Spleen (tissue), 13 donors: ENCODE measurements at regions of chr1 and their contacts with region 1.

Region 1: GRCh38 chr1:173476664-173477285 is 360 bp upstream of the PRDX6 start:
- DNase-seq: peak; percentile 97
- H3K4me3 ChIP-seq: peak overlapping the region; percentile 66 to 91 (median 86)
- H3K27ac ChIP-seq: peak overlapping the region; percentile 96 to 99 (median 97)
- H3K4me1 ChIP-seq: peaks cover 30 to 72% (median 61%) of the 10 kb centered on the region in 6 donors
- H3K27me3 ChIP-seq: no peaks in the 10 kb centered on the region
- CTCF ChIP-seq: no peak
- POLR2A ChIP-seq: peak in 2 of 3 donors; percentile 7 to 48

Region 2: GRCh38 chr1:173122958-173123852 is 353.6 kb before region 1 on chr1:
- intact Hi-C with region 1: no loop called
- DNase-seq: no peak
- H3K4me3 ChIP-seq: peak overlapping the region in 3 of 8 donors; percentile 1 to 42 (median 30)
- H3K27ac ChIP-seq: peak overlapping the region; percentile 14 to 85 (median 75)
- H3K4me1 ChIP-seq: peaks cover 6 to 26% (median 15%) of the 10 kb centered on the region in 6 donors
- H3K27me3 ChIP-seq: no peaks in the 10 kb centered on the region
- CTCF ChIP-seq: peak in 1 of 11 experiments; percentile 11
- POLR2A ChIP-seq: no peak

Region 3: GRCh38 chr1:173429471-173430402 is 47.0 kb before region 1 on chr1:
- intact Hi-C with region 1: loop called (anchors 5 kb)
- DNase-seq: peak; percentile 89
- H3K4me3 ChIP-seq: peak overlapping the region in 3 of 8 donors; percentile 5 to 44 (median 17)
- H3K27ac ChIP-seq: peak overlapping the region; percentile 65 to 86 (median 82)
- H3K4me1 ChIP-seq: peaks cover 22 to 34% (median 27%) of the 10 kb centered on the region in 6 donors
- H3K27me3 ChIP-seq: no peaks in the 10 kb centered on the region
- CTCF ChIP-seq: peak; percentile 45 to 78 (median 74)
- POLR2A ChIP-seq: no peak

Region 4: GRCh38 chr1:173954179-173954578 is 477.4 kb after region 1 on chr1:
- intact Hi-C with region 1: no loop called
- DNase-seq: no peak
- H3K4me3 ChIP-seq: no peak overlapping the region
- H3K27ac ChIP-seq: no peak overlapping the region
- H3K4me1 ChIP-seq: peaks cover 0 to 6% (median 0%) of the 10 kb centered on the region in 6 donors
- H3K27me3 ChIP-seq: no peaks in the 10 kb centered on the region
- CTCF ChIP-seq: no peak
- POLR2A ChIP-seq: no peak

Region 5: DNA sequence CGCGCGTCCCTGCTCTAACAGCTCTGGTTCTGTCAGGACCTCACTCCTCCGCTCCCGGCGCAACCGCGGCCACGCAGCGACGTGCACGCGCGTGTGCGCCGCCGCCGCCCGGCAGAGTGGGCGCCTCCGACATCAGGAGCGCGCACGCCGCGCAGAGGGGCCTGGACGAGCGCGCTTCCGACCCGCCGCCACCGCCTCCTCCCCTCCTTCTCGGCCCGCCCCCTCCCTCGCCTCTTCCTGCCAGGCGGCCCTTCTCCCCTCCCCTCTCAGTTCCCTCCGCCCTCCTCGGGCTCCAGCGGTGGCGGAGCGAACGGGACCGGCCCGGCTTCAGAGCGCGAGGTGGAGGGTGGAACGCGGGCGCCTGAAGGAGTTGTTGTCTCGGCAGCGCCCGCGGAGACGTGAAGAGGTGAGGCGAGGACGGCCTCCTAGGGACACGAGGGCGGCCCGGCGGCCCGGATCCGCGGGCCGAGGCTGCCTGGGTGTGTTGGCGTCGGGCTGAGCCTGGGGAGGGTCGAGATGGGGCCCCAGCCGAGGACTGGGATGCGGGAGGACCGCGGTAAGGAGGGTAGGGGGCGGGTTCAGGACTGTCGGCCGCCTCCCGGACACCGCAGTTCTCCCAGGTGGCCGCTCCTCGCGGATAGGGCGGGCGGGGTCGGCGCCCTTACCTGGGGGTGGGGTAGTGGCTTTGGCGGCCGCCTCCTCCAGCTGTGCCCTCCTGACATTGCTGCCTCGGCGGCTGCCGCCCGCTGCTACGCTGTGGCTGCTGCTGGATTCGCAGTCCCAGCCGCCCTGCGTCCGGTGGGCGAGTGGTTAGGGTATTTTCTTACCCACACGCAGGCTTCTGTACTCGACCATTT is 682.7 kb after region 1 on chr1 and contains the start of gene RABGAP1L:
- intact Hi-C with region 1: loop called (anchors 5 kb)
- DNase-seq: peak; percentile 99
- H3K4me3 ChIP-seq: peak within 1 kb of the TSS; percentile 76 to 98 (median 91)
- H3K27ac ChIP-seq: peak within 1 kb of the TSS; percentile 88 to 97 (median 92)
- H3K4me1 ChIP-seq: peaks cover 20 to 62% (median 51%) of the 10 kb centered on the region in 6 donors
- H3K27me3 ChIP-seq: no peaks in the 10 kb centered on the region
- CTCF ChIP-seq: peak in 1 of 11 experiments; percentile 10
- POLR2A ChIP-seq: peak in 2 of 3 donors; percentile 40 to 61
- total RNA-seq, gene RABGAP1L: 66.2 to 125 (median 78.4) TPM